RWPE1 (cell line): ENCODE measurements at regions of chr4 and their contacts with region 1.

Region 1: GRCh38 chr4:76179398-76180318 is 31.5 kb upstream of the NUP54 start:
- DNase-seq: peak; percentile 87
- H3K27ac ChIP-seq: no peak overlapping the region
- CTCF ChIP-seq: peak; percentile 86

Region 2: GRCh38 chr4:76074468-76074867 is 105.2 kb before region 1 on chr4 and contains the start of gene ART3:
- CTCF ChIA-PET with region 1: no interaction called
- POLR2A ChIA-PET with region 1: no interaction called
- DNase-seq: no peak
- H3K27ac ChIP-seq: no peak within 1 kb of the TSS
- CTCF ChIP-seq: no peak

Region 3: GRCh38 chr4:76305971-76306881 is 126.6 kb after region 1 on chr4 and contains the start of gene STBD1:
- CTCF ChIA-PET with region 1: interaction called, 16 read pairs
- POLR2A ChIA-PET with region 1: no interaction called
- DNase-seq: peak; percentile 64
- H3K27ac ChIP-seq: peak within 1 kb of the TSS; percentile 82
- CTCF ChIP-seq: no peak

Region 4: GRCh38 chr4:76377911-76378310 is 198.3 kb after region 1 on chr4:
- CTCF ChIA-PET with region 1: interaction called, 10 read pairs
- POLR2A ChIA-PET with region 1: no interaction called
- DNase-seq: peak; percentile 20
- H3K27ac ChIP-seq: no peak overlapping the region
- CTCF ChIP-seq: 0 out of 2 replicates have a peak, but pooled peaks have one; percentile 23

Region 5: DNA sequence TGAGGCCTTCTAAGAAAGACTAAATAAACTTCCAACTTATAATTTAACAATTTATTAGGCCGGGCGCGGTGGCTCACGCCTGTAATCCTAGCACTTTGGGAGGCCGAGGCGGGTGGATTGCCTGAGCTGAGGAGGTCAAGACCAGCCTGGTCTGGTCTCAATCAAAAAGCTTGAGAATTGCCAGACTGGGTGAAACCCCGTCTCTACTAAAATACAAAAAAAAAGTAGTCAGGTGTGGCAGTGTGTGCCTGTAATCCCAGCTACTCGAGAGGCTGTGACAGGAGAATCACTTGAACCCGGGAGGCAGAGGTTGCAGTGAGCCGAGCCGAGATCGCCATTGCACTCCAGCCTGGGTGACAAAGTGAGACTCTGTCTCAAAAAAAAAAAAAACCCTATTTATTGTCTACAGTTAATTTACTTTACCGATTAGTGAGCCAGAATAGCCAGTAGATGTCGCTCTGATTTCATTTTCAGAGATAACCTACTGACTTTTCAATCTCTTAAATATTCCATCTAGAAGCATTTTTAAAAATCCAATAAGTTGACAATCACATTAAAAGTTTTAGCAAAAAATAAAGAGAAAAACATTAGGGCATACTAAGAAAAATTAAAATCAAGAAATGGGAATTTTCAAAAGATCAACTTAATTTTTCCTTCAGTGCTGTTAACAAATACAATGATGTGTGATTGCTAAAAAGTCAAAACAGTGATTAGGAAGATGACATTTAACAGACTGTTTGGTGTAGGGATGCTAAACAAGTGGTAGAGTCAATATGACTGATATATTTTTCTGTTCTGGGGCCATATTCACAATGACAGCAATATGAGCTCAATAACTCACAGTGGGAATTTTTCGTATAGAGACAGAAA is 251.1 kb after region 1 on chr4:
- CTCF ChIA-PET with region 1: interaction called, 12 read pairs
- POLR2A ChIA-PET with region 1: no interaction called
- DNase-seq: peak; percentile 63
- H3K27ac ChIP-seq: no peak overlapping the region
- CTCF ChIP-seq: peak; percentile 90

Region 6: GRCh38 chr4:76504613-76505465 is 325.2 kb after region 1 on chr4:
- CTCF ChIA-PET with region 1: interaction called, 10 read pairs
- POLR2A ChIA-PET with region 1: no interaction called
- DNase-seq: peak; percentile 49
- H3K27ac ChIP-seq: no peak overlapping the region
- CTCF ChIP-seq: peak; percentile 76